WTC11 (cell line): ENCODE measurements at regions of chr9 and their contacts with region 1.

Region 1: DNA sequence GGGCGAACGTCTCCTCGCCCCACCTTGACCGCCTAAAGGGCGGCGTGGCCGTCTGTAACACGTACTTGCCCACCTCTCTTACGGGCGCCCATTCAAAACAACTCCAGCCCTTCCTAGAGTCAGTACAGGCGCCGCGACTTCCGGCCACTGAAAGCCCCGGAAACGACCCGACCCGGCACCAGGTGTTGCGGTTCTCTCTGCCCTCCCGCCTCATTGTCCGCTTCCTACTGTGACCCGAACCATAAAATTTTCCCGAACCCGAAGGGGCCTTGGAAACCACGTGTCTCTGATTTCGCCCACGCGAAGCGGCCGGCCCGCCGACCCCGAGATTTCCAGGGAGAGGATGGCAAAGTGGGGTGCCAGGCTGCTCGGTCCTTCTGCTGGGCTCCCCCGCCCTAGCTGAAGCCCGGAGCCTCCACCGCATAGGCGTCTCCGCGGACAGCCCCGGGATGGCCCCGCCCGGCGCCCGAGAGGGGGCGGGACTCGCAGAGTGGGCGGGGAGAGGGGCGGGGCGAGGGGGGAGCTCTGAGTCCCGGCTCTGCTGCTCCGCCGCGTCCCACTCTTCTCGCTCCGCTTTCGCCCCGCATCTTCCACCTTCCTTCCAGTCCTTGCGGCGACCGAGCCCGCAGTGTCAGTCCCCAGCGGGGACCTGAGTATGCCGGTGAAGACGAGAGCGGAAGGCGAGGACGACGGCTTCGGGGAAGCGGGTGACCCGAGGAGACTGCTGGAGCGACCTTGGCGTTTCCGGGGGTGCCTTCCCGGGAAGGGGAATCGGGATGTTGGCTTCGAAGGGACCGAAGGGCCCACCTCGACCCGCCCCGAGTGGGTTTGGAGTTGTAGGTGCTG is 684 bp upstream of the PTGES2 start:
- DNase-seq: peak; percentile 80
- ATAC-seq: peak; percentile 80
- H3K4me3 Mint-ChIP-seq: peak overlapping the region; percentile 94
- H3K27ac Mint-ChIP-seq: peak overlapping the region; percentile 97
- H3K4me1 Mint-ChIP-seq: peaks cover 17% of the 10 kb centered on the region
- H3K27me3 Mint-ChIP-seq: peaks cover 19% of the 10 kb centered on the region
- CTCF ChIP-seq: no peak

Region 2: GRCh38 chr9:128094166-128094967 is 33.8 kb before region 1 on chr9:
- CTCF ChIA-PET with region 1: interaction called, 21 read pairs
- POLR2A ChIA-PET with region 1: no interaction called
- DNase-seq: peak; percentile 64
- ATAC-seq: peak; percentile 25
- H3K4me3 Mint-ChIP-seq: no peak overlapping the region
- H3K27ac Mint-ChIP-seq: peak overlapping the region; percentile 90
- H3K4me1 Mint-ChIP-seq: peaks cover 44% of the 10 kb centered on the region
- H3K27me3 Mint-ChIP-seq: no peaks in the 10 kb centered on the region
- CTCF ChIP-seq: no peak

Region 3: DNA sequence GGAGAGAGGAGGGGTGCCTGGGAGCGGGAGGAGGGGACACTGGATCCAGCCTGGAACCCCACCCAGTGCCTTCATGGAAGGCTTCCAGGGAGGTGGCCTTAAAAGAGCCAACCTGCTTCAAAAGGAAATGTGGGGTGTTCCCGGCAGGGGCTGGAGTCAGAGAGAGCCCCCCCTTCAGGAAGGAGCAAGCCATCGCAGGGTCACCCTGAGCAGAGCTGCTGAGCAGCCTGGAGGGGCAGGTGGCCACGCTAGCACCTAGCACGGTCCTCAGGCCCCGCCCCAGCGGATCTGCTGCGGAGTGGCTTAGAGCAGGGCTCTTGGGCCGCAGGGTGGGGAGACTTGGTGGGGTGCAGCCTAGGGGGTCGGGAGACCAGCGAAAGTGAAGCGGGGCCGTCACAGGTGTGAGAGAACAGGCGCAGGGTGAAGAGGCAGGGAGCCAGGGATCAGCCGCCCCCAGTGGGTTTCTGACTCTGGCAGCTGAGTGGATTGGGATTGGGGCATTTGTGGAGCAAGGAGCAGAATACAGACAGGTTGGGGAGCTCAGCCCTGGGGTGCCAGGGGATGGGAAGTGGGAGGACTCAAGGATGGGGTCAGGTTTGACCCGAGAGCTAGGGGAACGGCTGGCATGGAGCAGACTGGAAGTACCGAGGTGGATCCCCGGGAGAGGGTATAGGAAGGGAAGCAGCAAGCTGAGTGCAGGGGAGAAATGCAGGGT is 22.5 kb after region 1 on chr9:
- CTCF ChIA-PET with region 1: interaction called, 44 read pairs
- POLR2A ChIA-PET with region 1: no interaction called
- DNase-seq: peak; percentile 82
- ATAC-seq: peak; percentile 95
- H3K4me3 Mint-ChIP-seq: peak overlapping the region; percentile 25; the same call in 1 of the 2 replicates
- H3K27ac Mint-ChIP-seq: no peak overlapping the region
- H3K4me1 Mint-ChIP-seq: peaks cover 12% of the 10 kb centered on the region
- H3K27me3 Mint-ChIP-seq: peaks cover 7% of the 10 kb centered on the region; the same call in 1 of the 2 replicates
- CTCF ChIP-seq: peak; percentile 59

Region 4: DNA sequence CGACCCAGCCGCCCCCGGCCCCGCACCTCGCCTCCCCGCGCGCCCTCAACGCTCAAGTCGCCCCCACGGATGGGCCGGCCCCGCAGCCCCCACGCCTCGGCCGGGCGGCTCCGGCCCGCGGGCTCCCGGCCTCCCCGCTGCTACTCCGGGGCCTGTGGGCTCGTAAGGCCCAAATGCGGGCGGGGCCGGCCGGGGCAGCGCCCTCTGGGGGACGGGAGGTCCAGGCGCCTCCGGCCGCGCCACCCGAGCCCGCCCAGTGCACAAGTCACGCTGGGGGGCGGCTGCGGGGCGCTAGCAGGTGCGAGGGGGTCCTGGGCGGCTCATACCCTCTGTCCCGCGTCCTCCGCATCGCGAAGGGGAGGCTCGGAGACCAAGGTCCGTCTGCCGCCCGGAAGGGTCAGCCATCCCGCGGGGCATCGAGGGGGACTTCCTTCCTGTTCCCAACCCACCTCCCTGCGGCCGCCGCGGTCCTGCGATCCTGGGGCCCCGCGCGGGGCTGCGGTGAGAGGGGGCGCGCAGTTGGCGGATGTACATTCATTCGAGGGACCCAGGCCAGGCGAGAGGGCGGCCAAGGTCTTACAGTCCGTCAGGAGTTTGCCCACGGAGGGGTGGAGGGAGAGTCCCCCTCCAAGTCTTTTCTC is 63.3 kb after region 1 on chr9 and contains the start of gene CIZ1:
- CTCF ChIA-PET with region 1: interaction called, 11 read pairs
- POLR2A ChIA-PET with region 1: no interaction called
- DNase-seq: peak; percentile 75
- ATAC-seq: peak; percentile 91
- H3K4me3 Mint-ChIP-seq: peak within 1 kb of the TSS; percentile 90
- H3K27ac Mint-ChIP-seq: no peak within 1 kb of the TSS
- H3K4me1 Mint-ChIP-seq: peaks cover 11% of the 10 kb centered on the region
- H3K27me3 Mint-ChIP-seq: peaks cover 10% of the 10 kb centered on the region
- CTCF ChIP-seq: peak; percentile 40; the same call in 1 of the 2 replicates
- total RNA-seq, gene CIZ1: 86.1 to 90.6 TPM (median 90.2 TPM) in 3 replicates

Region 5: GRCh38 chr9:128249908-128250838 is 122.0 kb after region 1 on chr9:
- CTCF ChIA-PET with region 1: interaction called, 13 read pairs
- POLR2A ChIA-PET with region 1: no interaction called
- DNase-seq: peak; percentile 98
- ATAC-seq: peak; percentile 91
- H3K4me3 Mint-ChIP-seq: peak overlapping the region; percentile 85
- H3K27ac Mint-ChIP-seq: peak overlapping the region; percentile 83
- H3K4me1 Mint-ChIP-seq: peaks cover 41% of the 10 kb centered on the region
- H3K27me3 Mint-ChIP-seq: peaks cover 9% of the 10 kb centered on the region
- CTCF ChIP-seq: no peak

Region 6: DNA sequence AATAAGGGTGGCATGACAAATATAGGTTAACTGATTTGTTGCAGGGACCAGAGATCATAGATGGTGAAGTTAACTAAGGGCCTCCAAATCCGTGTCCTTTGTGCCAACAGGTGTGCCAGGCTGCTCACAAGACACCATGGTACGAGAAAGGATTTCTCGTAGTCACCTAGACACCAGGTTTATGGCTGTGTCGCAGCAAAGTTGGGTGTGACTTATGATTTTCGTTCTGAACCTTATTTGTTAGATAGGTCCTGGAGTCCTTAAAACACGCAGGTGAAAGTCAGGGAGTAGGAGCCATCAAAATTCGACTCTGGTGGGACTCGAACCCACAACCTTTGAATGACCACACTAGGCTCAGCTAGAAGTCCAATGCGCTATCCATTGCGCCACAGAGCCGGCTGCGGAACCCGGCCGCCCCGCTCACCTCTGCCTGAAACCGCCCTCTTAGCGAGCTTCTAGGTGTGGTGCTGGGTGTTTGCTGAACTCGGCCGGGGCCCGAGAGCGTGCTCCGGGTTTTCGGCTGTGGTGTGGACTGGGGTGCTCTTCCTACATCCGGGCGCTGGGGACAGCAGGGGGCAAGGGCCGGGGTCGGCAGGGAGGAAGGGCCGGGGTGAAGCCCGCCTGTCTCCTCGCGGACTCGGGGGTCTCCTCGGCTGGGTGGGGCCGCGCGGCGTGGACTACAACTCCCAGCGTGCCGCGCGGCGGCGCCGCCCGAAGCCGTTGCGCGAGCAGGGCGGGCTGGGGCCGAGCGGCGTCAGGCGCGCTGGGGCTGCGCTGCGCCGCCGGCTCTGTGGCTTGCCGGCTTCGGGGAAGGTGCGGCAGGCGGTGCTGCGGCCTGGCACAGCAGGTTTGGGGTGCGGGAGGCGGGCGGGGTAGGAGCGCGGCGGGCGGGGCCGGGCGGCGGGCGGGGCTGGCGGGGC is 211.8 kb after region 1 on chr9 and contains the start of gene SLC27A4:
- CTCF ChIA-PET with region 1: no interaction called
- POLR2A ChIA-PET with region 1: no interaction called
- DNase-seq: peak; percentile 91
- ATAC-seq: peak; percentile 85
- H3K4me3 Mint-ChIP-seq: peak within 1 kb of the TSS; percentile 87
- H3K27ac Mint-ChIP-seq: peak within 1 kb of the TSS; percentile 84
- H3K4me1 Mint-ChIP-seq: peaks cover 5% of the 10 kb centered on the region; the same call in 1 of the 2 replicates
- H3K27me3 Mint-ChIP-seq: no peaks in the 10 kb centered on the region
- CTCF ChIP-seq: no peak
- total RNA-seq, gene SLC27A4: 20.8 to 23.8 TPM (median 21.2 TPM) in 3 replicates